GM23248 (cell line): ENCODE measurements at regions of chr12 and their contacts with region 1.

Region 1: DNA sequence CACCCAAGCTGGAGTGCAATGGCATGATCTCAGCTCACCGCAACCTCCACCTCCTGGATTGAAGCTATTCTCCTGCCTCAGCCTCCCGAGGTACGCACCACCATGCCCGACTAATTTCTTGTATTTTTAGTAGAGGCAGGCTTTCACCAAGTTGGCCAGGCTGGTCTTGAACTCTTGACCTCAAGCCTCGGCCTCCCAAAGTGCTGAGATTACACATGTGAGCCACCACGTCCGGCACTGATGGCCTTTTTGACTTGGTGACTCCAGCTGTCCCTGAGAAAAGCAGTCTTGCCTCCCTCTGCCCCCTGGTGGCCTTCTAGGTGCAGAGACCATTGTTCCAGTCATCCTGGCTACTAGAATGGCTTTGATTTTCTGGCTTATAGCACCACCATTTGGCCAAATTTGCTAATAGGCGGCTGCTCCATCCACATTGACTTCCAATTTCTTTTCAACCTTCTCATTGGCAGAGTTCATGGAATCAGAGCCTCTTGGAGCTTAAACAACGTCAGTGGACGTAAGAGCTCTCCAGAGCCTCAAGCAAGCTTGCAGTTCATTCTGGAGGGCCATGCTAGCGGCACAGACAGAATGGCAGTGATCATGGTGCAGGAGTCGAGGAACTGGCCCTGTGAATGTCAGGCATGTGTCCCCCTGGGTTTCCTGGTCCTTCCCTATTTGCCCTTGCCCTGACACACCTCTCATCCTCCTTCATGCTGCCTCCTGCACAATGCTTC is 25.4 kb upstream of the EIF4B start:
- DNase-seq: peak; percentile 94
- H3K4me3 ChIP-seq: no peak overlapping the region
- H3K27ac ChIP-seq: no peak overlapping the region
- H3K4me1 ChIP-seq: peaks cover 6% of the 10 kb centered on the region; the same call in 1 of the 2 replicates
- H3K27me3 ChIP-seq: no peaks in the 10 kb centered on the region

Region 2: DNA sequence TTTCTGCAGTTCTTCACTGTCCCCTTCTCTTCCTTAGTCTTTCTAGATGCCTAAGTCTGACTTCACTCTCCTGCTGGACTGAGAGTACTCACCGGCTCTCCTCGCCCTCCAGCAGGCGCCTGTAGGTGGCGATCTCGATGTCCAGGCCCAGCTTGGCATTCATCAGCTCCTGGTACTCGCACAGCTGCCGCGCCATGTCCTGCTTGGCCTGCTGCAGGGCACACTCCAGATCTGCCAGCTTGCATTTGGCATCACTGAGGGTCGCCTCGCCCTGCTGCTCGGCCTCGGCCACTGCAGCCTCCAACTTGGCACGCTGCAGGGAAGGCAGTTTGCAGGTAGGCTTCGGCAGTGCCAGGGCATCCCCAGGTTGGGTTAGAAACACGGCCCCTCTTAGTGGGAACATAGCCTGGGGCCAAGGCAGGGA is 600.6 kb before region 1 on chr12:
- in situ Hi-C with region 1: loop called (anchors 25 kb)
- DNase-seq: peak; percentile 57
- H3K4me3 ChIP-seq: no peak overlapping the region
- H3K27ac ChIP-seq: no peak overlapping the region
- H3K4me1 ChIP-seq: no peaks in the 10 kb centered on the region
- H3K27me3 ChIP-seq: peaks cover 8% of the 10 kb centered on the region; the same call in 1 of the 2 replicates

Region 3: GRCh38 chr12:52582971-52583456 is 397.8 kb before region 1 on chr12:
- in situ Hi-C with region 1: loop called (anchors 10 kb)
- DNase-seq: peak; percentile 81
- H3K4me3 ChIP-seq: no peak overlapping the region
- H3K27ac ChIP-seq: no peak overlapping the region
- H3K4me1 ChIP-seq: no peaks in the 10 kb centered on the region
- H3K27me3 ChIP-seq: peaks cover 16% of the 10 kb centered on the region

Region 4: GRCh38 chr12:52884526-52885293 is 96.1 kb before region 1 on chr12:
- in situ Hi-C with region 1: loop called (anchors 5 kb)
- DNase-seq: peak; percentile 67
- H3K4me3 ChIP-seq: no peak overlapping the region
- H3K27ac ChIP-seq: no peak overlapping the region
- H3K4me1 ChIP-seq: no peaks in the 10 kb centered on the region
- H3K27me3 ChIP-seq: no peaks in the 10 kb centered on the region

Region 5: GRCh38 chr12:53205747-53206419 is 225.0 kb after region 1 on chr12:
- in situ Hi-C with region 1: no loop called
- DNase-seq: peak; percentile 96
- H3K4me3 ChIP-seq: no peak overlapping the region
- H3K27ac ChIP-seq: peak overlapping the region; percentile 84
- H3K4me1 ChIP-seq: peaks cover 19% of the 10 kb centered on the region
- H3K27me3 ChIP-seq: no peaks in the 10 kb centered on the region